Ovary (tissue), 10 donors: ENCODE measurements at regions of chr11 and their contacts with region 1.

Region 1: GRCh38 chr11:11036848-11037732 is 179.2 kb upstream of the ZBED5 start:
- DNase-seq: no peak
- H3K4me3 ChIP-seq: no peak overlapping the region
- H3K27ac ChIP-seq: no peak overlapping the region
- H3K4me1 ChIP-seq: peaks cover 13% of the 10 kb centered on the region
- H3K27me3 ChIP-seq: no peaks in the 10 kb centered on the region
- CTCF ChIP-seq: peak in 1 of 3 donors; percentile 42
- EP300 ChIP-seq: no peak
- POLR2A ChIP-seq: no peak

Region 2: DNA sequence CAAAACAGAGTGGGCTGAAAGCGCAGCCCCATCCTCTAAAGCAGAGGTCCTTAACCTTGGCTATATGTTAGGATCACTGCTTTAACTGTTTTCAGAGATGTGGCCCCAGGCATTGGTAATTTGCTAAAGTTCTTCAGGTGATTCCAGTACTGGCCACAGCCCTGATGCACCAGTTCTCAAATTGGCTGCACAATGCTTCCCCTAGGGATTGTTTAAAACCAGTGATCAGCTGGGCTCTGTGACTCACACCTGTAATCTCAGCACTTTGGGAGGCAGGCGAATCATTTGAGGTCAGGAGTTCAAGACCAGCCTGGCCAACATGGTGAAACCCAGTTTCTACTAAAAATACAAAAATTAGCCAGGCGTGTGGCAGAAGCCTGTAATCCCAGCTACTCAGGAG is 335.1 kb before region 1 on chr11:
- intact Hi-C with region 1: no loop called
- DNase-seq: no peak
- H3K4me3 ChIP-seq: no peak overlapping the region
- H3K27ac ChIP-seq: no peak overlapping the region
- H3K4me1 ChIP-seq: no peaks in the 10 kb centered on the region
- H3K27me3 ChIP-seq: no peaks in the 10 kb centered on the region
- CTCF ChIP-seq: no peak
- EP300 ChIP-seq: no peak
- POLR2A ChIP-seq: no peak

Region 3: DNA sequence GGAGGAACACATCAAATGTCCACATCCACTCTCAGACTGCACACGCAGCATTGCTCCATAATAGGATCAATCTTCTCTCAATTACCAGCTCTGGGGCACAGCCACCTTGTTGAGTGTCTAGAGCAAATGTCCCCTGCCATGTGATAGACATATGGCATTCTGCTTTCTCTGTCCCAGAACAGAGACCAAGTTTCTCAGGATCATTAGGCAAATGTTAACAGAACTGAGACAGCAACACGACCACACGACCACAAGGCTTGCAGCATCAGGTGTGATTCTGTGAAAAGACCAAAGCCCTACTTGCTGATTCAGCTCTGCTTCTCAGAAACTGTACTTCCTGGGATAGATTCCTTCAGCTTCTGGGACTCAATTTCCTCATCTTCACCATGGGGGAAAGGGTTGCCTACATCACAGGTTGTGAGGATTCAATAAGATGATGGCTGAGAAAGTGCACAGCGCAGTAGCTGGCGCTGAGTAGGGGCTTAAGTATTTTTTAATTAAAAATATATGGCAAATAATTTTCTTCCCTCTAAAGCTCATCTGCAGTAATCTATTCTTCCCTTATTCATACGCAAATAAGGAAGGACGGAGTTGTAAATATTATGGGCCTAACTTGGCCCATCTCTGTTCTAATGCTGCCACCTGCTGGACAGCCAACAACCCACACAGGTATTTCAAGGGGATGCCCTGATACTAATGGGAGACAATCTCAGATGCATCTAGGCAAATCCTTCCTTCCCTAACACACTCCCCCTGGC is 750.4 kb after region 1 on chr11:
- intact Hi-C with region 1: loop called (anchors 2 to 5 kb)
- DNase-seq: peak; percentile 73 to 83 (median 82)
- H3K4me3 ChIP-seq: no peak overlapping the region
- H3K27ac ChIP-seq: no peak overlapping the region
- H3K4me1 ChIP-seq: no peaks in the 10 kb centered on the region
- H3K27me3 ChIP-seq: no peaks in the 10 kb centered on the region
- CTCF ChIP-seq: peak; percentile 52 to 91 (median 79)
- EP300 ChIP-seq: no peak
- POLR2A ChIP-seq: no peak